ENCODE measurements at regions of chr11 and their contacts with region 1.

Region 1: GRCh38 chr11:96464700-96465307 is 75.0 kb downstream of the JRKL start:
- DNase-seq: peak; percentile 90
- H3K4me3 ChIP-seq: peak overlapping the region; percentile 30
- H3K27ac ChIP-seq: no peak overlapping the region
- H3K4me1 ChIP-seq: peaks cover 6% of the 10 kb centered on the region
- H3K27me3 ChIP-seq: no peaks in the 10 kb centered on the region
- CTCF ChIP-seq: peak; percentile 91

Region 2: DNA sequence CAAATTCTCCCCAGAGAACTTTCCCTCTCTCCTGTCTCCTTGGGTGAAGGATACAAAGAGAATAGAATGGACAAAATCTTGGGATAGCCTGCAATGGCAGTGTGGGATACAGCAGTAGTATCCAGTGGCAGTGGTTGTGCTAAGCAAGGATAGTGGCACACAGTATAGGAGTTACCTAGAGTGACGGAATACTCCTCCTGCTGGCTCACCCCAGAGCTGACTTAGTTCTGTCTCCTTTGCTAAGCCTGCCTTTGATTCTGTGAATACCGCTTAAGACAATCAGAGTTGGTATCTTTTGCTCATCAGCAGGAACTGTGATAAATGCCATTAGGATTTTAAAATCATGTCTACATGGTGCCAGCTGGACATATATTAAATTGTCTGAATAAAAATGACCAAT is 329.3 kb after region 1 on chr11:
- CTCF ChIA-PET with region 1: interaction called, 5 read pairs
- POLR2A ChIA-PET with region 1: no interaction called
- intact Hi-C with region 1: loop called (anchors 5 kb)
- DNase-seq: peak; percentile 73
- H3K4me3 ChIP-seq: no peak overlapping the region
- H3K27ac ChIP-seq: no peak overlapping the region
- H3K4me1 ChIP-seq: peaks cover 8% of the 10 kb centered on the region
- H3K27me3 ChIP-seq: peaks cover 4% of the 10 kb centered on the region
- CTCF ChIP-seq: peak; percentile 56

Region 3: GRCh38 chr11:96905143-96905542 is 440.3 kb after region 1 on chr11:
- CTCF ChIA-PET with region 1: interaction called, 4 read pairs
- POLR2A ChIA-PET with region 1: no interaction called
- intact Hi-C with region 1: loop called (anchors 10 kb)
- DNase-seq: peak; percentile 5
- H3K4me3 ChIP-seq: no peak overlapping the region
- H3K27ac ChIP-seq: no peak overlapping the region
- H3K4me1 ChIP-seq: no peaks in the 10 kb centered on the region
- H3K27me3 ChIP-seq: no peaks in the 10 kb centered on the region
- CTCF ChIP-seq: no peak

Region 4: DNA sequence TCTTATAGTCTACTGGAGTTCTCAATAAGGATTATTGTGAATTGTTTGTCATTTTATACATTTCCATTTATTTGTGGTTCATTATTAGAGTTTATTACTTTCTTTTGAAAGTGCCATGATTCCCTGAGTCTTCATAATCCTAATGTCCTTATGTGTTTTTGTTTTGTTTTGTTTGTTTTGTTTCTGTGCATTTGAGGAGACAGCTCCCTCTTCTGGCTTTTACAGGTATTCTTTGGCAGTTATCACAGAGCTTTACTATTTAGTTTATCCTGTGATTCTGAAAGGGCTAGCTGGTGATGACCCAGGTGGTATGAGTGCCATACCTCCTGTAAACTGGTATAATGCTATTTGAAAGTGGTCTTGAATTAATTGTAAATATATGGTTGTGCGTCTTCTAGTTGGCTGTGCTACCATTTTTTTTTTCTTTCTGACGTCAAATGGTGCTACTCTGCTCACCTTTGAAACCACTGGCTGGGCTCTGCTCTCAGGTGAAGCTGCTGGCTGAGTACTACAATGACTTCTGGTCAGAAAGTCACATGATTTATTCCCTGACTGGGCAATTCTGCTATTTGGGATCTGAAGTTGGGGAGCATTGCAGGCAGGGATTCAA is 676.2 kb after region 1 on chr11:
- CTCF ChIA-PET with region 1: interaction called, 26 read pairs
- POLR2A ChIA-PET with region 1: no interaction called
- intact Hi-C with region 1: loop called (anchors 1 kb)
- DNase-seq: peak; percentile 53
- H3K4me3 ChIP-seq: no peak overlapping the region
- H3K27ac ChIP-seq: no peak overlapping the region
- H3K4me1 ChIP-seq: no peaks in the 10 kb centered on the region
- H3K27me3 ChIP-seq: no peaks in the 10 kb centered on the region
- CTCF ChIP-seq: peak; percentile 80

Region 5: GRCh38 chr11:97325693-97326092 is 860.9 kb after region 1 on chr11:
- CTCF ChIA-PET with region 1: no interaction called
- POLR2A ChIA-PET with region 1: interaction called, 12 read pairs
- intact Hi-C with region 1: no loop called
- DNase-seq: no peak
- H3K4me3 ChIP-seq: no peak overlapping the region
- H3K27ac ChIP-seq: no peak overlapping the region
- H3K4me1 ChIP-seq: no peaks in the 10 kb centered on the region
- H3K27me3 ChIP-seq: no peaks in the 10 kb centered on the region
- CTCF ChIP-seq: no peak

Region 6: GRCh38 chr11:98069861-98070260 is 1605.1 kb after region 1 on chr11:
- CTCF ChIA-PET with region 1: interaction called, 11 read pairs
- POLR2A ChIA-PET with region 1: no interaction called
- intact Hi-C with region 1: no loop called
- DNase-seq: no peak
- H3K4me3 ChIP-seq: no peak overlapping the region
- H3K27ac ChIP-seq: no peak overlapping the region
- H3K4me1 ChIP-seq: no peaks in the 10 kb centered on the region
- H3K27me3 ChIP-seq: no peaks in the 10 kb centered on the region
- CTCF ChIP-seq: no peak